Activated CD4-positive, alpha-beta memory T cell treated with anti-CD3 and anti-CD28 coated beads for 36 hours (primary cell): ENCODE measurements at regions of chr11 and their contacts with region 1.

Region 1: GRCh38 chr11:118304568-118305248 is at the start of gene CD3E:
- DNase-seq: peak; percentile 84
- H3K4me3 Mint-ChIP-seq: peak within 1 kb of the TSS; percentile 100
- H3K27ac Mint-ChIP-seq: peak within 1 kb of the TSS; percentile 100
- H3K4me1 Mint-ChIP-seq: peaks cover 66% of the 10 kb centered on the region
- H3K27me3 Mint-ChIP-seq: no peaks in the 10 kb centered on the region
- total RNA-seq, gene CD3E: 476 to 488 TPM

Region 2: DNA sequence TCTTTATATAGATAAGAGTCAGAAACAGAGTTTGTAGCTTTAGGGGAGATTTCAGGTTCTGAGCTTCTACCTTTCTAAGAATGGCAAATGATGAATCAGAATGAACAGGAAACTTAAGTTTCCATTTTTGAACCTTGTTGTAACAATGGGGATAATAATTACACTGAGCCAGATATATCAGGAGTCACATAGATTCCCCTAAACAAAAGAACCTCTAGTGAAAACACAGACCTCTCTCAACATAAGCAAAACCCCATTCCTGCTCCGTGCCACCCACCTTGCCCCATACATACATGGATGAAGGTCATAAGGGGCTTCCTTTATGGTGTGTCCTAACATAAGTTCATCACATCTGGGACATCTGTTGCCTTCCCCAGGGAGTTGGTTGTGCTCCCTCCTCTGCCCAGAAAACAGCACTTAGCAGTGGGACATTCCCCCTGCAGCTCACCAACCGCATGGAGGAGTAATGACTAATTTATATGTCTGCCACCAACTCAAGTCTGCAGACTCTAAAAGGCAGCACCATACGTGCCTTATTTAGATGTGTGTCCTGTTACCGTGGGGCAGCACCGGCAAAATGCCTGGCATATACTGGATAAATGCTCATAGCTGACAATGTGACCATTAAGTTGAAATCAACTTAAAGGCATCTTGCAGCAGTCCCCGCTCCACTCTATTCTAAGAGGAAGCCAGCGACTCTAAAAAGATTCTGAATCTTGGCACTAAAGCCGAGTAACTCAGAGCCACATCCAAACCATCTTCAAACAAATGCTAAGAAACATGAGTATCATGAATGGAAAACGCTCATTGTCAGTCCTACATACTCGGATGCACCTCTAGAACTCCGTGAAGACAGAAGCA is 87.9 kb before region 1 on chr11:
- CTCF ChIA-PET with region 1: interaction called, 3 read pairs
- POLR2A ChIA-PET with region 1: interaction called, 10 read pairs
- intact Hi-C with region 1: no loop called
- DNase-seq: peak; percentile 78
- H3K4me3 Mint-ChIP-seq: peak overlapping the region; percentile 81
- H3K27ac Mint-ChIP-seq: peak overlapping the region; percentile 97
- H3K4me1 Mint-ChIP-seq: peaks cover 97% of the 10 kb centered on the region
- H3K27me3 Mint-ChIP-seq: no peaks in the 10 kb centered on the region

Region 3: GRCh38 chr11:118240999-118241768 is 63.5 kb before region 1 on chr11:
- CTCF ChIA-PET with region 1: interaction called, 3 read pairs
- POLR2A ChIA-PET with region 1: interaction called, 17 read pairs
- intact Hi-C with region 1: loop called (anchors 2 kb)
- DNase-seq: peak; percentile 84
- H3K4me3 Mint-ChIP-seq: peak overlapping the region; percentile 78
- H3K27ac Mint-ChIP-seq: peak overlapping the region; percentile 96
- H3K4me1 Mint-ChIP-seq: peaks cover 88% of the 10 kb centered on the region
- H3K27me3 Mint-ChIP-seq: no peaks in the 10 kb centered on the region

Region 4: DNA sequence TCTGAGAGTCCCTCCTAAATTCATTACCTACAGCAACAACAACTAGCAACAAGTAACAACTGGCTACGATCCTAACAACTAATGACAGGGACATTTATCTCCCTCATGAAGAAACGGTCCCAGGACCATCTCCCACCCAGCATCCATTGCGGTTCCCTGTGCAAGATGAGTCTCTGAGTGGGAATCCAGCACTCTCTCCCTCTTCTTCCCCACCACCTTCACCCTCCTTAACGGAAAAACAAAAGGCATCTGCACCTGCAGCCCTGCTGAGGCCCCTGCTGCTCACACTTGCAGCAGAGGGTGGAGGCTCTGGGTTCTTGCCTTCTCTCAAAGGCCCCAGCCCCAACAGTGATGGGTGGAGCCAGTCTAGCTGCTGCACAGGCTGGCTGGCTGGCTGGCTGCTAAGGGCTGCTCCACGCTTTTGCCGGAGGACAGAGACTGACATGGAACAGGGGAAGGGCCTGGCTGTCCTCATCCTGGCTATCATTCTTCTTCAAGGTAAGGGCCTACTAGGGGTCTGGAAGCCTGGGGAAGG is 39.3 kb after region 1 on chr11 and contains the start of gene CD3G:
- CTCF ChIA-PET with region 1: interaction called, 21 read pairs
- POLR2A ChIA-PET with region 1: interaction called, 3 read pairs
- intact Hi-C with region 1: loop called (anchors 1 kb)
- DNase-seq: peak; percentile 81
- H3K4me3 Mint-ChIP-seq: peak within 1 kb of the TSS; percentile 82
- H3K27ac Mint-ChIP-seq: peak within 1 kb of the TSS; percentile 98
- H3K4me1 Mint-ChIP-seq: peaks cover 52% of the 10 kb centered on the region
- H3K27me3 Mint-ChIP-seq: no peaks in the 10 kb centered on the region
- total RNA-seq, gene CD3G: 137 to 138 TPM

Region 5: DNA sequence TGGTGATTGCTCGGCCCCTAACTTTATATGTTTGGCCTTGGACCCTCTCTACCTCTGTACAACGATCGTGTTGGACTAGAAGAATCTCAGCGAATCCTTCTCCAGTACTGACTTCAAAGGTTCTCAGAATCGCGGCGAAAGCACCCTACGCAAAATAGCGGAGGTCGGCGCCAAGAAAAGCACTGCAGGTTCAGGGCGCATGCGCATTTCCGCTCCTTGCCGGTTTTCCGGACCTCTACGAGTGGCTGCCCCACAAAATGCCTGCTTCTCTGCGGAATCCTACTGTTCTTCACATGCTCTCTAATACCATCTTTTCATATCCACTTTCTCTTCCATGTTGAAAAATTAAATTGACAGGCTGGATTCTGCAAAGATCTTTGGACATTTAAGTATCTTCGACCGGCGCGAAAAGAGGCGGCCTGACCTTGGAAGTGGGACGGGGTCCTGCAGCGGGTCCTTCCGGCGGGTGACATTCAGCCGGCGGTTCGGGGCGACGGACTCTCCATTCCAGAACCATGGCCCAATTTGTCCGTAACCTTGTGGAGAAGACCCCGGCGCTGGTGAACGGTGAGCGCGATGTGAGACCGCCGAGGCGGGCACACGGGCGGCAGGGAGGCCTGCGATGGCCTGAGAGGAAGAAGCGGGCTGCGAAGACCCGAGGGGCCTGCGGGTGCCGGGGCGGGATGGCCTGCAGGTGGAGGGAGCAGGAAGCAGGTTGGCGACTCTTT is 96.6 kb after region 1 on chr11 and contains the start of gene ATP5MG:
- CTCF ChIA-PET with region 1: interaction called, 3 read pairs
- POLR2A ChIA-PET with region 1: interaction called, 3 read pairs
- intact Hi-C with region 1: loop called (anchors 2 kb)
- DNase-seq: peak; percentile 95
- H3K4me3 Mint-ChIP-seq: peak within 1 kb of the TSS; percentile 97
- H3K27ac Mint-ChIP-seq: peak within 1 kb of the TSS; percentile 98
- H3K4me1 Mint-ChIP-seq: peaks cover 66% of the 10 kb centered on the region
- H3K27me3 Mint-ChIP-seq: no peaks in the 10 kb centered on the region
- total RNA-seq, gene ATP5MG: 298 to 306 TPM